ENCODE measurements at regions of chr4 and their contacts with region 1.

Region 1: DNA sequence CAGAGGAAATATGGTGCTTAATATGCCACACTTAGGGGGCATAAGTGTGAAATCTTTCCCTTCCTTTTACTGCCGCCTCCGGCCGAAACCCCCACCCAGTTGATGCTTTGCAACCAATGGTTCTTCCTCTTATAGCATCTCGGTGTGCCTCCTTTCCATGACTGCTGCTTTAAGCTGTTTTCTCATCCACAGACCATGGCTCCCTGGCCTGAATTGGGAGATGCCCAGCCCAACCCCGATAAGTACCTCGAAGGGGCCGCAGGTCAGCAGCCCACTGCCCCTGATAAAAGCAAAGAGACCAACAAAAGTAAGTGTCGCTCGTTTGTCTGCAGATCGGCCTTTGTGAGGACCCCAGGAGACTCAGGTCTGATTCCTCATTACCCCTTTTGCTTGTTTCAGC is 6.7 kb downstream of the SLC34A2 start:
- DNase-seq: no peak
- H3K4me3 ChIP-seq: no peak overlapping the region
- H3K27ac ChIP-seq: no peak overlapping the region
- H3K4me1 ChIP-seq: no peaks in the 10 kb centered on the region
- H3K27me3 ChIP-seq: no peaks in the 10 kb centered on the region
- CTCF ChIP-seq: no peak

Region 2: GRCh38 chr4:25800245-25800644 is 137.9 kb after region 1 on chr4:
- CTCF ChIA-PET with region 1: no interaction called
- POLR2A ChIA-PET with region 1: interaction called, 15 read pairs
- intact Hi-C with region 1: no loop called
- DNase-seq: peak; percentile 57
- H3K4me3 ChIP-seq: no peak overlapping the region
- H3K27ac ChIP-seq: peak overlapping the region; percentile 18
- H3K4me1 ChIP-seq: peaks cover 16% of the 10 kb centered on the region
- H3K27me3 ChIP-seq: no peaks in the 10 kb centered on the region
- CTCF ChIP-seq: no peak

Measured in A673 (cell line).